ENCODE measurements at regions of chr12 and their contacts with region 1.

Region 1: DNA sequence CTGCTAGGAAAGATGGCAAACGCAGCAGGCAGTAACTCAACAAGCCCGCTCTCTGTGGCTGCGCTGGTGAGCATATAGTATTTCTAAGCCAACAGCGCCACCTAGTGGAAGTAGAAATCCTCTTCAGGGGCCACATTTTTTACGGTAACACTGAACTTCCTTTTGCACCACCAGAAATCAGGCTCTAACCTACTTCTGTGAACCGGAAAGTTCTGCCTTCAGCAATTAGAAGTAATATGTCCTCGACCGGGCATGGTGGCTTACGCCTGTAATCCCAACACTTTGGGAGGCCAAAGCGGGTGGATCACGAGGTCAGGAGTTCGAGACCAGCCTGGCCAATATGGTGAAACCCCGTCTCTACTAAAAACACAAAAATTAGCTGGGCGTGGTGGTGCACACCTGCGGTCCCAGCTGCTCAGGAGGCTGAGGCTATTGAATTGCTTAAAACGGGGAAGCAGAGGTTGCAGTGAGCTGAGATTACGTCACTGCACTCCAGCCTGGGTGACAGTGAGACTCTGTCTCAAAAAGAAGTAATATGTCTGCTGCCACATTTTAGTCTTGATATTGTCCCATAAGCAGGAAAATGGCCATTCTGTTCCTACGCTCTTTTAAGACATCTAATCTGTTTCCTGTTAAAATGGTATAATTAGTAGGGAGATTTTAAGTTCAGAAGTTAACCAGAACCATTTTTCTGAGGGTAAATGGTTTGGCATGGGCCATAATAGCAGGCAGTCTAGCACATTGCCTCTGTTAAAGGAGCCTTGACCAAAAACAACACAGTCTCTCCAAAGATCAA is 26.8 kb downstream of the APOBEC1 start:
- H3K4me3 ChIP-seq: no peak overlapping the region
- H3K27ac ChIP-seq: no peak overlapping the region
- H3K4me1 ChIP-seq: no peaks in the 10 kb centered on the region
- CTCF ChIP-seq: peak; percentile 79

Region 2: GRCh38 chr12:7219599-7220243 is 419.2 kb before region 1 on chr12:
- CTCF ChIA-PET with region 1: interaction called, 10 read pairs
- POLR2A ChIA-PET with region 1: no interaction called
- H3K4me3 ChIP-seq: no peak overlapping the region
- H3K27ac ChIP-seq: no peak overlapping the region
- H3K4me1 ChIP-seq: no peaks in the 10 kb centered on the region
- CTCF ChIP-seq: peak; percentile 81

Region 3: DNA sequence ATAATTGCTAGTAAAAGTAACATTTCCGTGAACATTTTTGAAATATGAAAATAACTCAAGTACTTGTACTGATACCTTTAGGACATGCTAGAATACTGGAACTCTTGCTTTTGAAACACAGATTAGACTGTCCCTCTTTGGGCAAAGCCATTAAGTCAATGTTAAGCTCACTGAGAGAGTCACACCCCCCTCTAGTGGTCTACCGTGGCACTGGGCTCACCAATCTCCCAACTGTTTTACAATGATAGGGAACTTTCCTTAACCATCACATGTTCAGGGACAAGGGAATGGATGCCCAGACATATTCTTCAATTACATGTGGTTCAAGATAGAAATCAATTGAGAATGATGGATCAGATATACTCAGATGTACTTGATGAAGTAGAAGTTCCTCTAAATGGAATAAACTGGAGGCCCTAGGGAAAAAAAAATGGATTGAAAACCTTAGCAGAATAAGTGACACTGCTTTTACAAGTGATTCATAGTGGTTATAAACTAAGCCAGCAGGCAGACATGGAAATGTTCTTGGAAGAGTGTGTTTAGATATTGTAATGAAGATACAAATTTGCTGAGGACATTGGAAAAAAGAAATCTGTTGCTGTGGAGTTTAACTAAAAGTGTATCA is 168.0 kb after region 1 on chr12:
- CTCF ChIA-PET with region 1: interaction called, 58 read pairs
- POLR2A ChIA-PET with region 1: no interaction called
- H3K4me3 ChIP-seq: no peak overlapping the region
- H3K27ac ChIP-seq: no peak overlapping the region
- H3K4me1 ChIP-seq: no peaks in the 10 kb centered on the region
- CTCF ChIP-seq: peak; percentile 73

Measured in HEK293 (cell line).